Mammary epithelial cell (primary cell): ENCODE measurements at regions of chr2 and their contacts with region 1.

Region 1: DNA sequence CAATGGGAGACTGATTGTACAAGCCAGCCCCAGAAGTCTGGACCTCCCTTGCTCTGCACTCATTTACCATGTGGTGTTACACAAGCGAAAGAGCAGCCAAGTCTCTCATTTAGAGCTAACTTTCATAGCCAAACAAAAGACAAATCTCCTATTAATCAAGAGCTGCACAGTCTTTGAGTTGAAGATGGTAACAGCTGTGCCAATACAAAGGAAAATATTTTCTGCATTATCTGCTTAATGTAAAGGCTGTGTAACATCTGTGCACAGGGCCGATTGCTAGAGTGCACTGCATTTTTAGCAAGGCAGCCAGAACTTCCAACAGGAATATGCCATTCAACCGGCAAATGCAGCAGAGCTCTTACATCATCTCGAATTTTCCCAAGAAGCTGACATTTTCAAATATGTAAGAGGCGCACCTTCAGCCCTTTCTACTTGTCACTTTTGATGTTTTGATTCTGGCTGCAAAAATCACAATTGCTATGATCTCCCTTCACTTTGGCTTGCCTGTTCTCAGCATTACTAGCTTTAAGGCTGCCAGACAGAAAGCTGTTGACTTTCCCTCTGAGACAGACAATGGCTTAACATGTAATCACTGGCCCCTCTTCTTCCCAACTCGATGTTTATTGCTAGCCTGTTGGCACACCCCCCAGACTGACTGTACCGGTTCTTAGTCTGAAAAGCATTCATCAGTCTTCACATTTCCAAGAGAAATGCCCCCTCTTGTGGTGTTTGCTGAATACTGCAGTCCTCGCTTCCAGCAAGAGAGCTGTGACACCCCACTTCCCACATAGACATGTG is 96.9 kb upstream of the TANK start:
- DNase-seq: peak; percentile 77
- H3K4me3 ChIP-seq: no peak overlapping the region
- H3K27ac ChIP-seq: no peak overlapping the region
- H3K4me1 ChIP-seq: peaks cover 7% of the 10 kb centered on the region
- H3K27me3 ChIP-seq: no peaks in the 10 kb centered on the region
- CTCF ChIP-seq: peak; percentile 93 to 96

Region 2: GRCh38 chr2:160252278-160252887 is 811.0 kb before region 1 on chr2:
- CTCF ChIA-PET with region 1: no interaction called
- dilution Hi-C with region 1: no loop called
- in situ Hi-C with region 1: no loop called
- intact Hi-C with region 1: loop called (anchors 10 kb)
- DNase-seq: no peak
- H3K4me3 ChIP-seq: no peak overlapping the region
- H3K27ac ChIP-seq: no peak overlapping the region
- H3K4me1 ChIP-seq: peaks cover 16% of the 10 kb centered on the region
- H3K27me3 ChIP-seq: no peaks in the 10 kb centered on the region
- CTCF ChIP-seq: peak; percentile 76 to 83

Region 3: DNA sequence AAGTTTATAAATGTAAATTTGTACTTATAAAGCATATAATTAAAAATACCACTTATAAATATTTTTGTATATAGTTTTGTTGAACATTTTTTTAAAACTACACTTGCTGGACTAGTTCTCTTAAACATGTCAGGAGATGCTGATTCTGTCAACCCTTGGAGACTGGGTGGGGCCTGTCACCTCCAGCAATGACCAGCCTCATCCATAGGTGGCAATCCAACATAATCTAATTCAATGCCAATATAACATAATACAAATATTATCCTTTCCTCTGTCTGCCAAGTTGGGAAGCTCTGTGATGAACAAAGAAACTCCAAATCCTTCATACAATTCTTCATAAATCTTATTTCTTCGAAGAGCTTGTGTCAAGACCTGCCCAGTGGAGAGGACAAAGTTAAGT is 710.2 kb before region 1 on chr2:
- CTCF ChIA-PET with region 1: no interaction called
- dilution Hi-C with region 1: no loop called
- in situ Hi-C with region 1: no loop called
- intact Hi-C with region 1: loop called (anchors 1 kb)
- DNase-seq: no peak
- H3K4me3 ChIP-seq: no peak overlapping the region
- H3K27ac ChIP-seq: peak overlapping the region; percentile 53
- H3K4me1 ChIP-seq: peaks cover 28% of the 10 kb centered on the region
- H3K27me3 ChIP-seq: no peaks in the 10 kb centered on the region
- CTCF ChIP-seq: peak in 1 of 2 donors; percentile 51

Region 4: DNA sequence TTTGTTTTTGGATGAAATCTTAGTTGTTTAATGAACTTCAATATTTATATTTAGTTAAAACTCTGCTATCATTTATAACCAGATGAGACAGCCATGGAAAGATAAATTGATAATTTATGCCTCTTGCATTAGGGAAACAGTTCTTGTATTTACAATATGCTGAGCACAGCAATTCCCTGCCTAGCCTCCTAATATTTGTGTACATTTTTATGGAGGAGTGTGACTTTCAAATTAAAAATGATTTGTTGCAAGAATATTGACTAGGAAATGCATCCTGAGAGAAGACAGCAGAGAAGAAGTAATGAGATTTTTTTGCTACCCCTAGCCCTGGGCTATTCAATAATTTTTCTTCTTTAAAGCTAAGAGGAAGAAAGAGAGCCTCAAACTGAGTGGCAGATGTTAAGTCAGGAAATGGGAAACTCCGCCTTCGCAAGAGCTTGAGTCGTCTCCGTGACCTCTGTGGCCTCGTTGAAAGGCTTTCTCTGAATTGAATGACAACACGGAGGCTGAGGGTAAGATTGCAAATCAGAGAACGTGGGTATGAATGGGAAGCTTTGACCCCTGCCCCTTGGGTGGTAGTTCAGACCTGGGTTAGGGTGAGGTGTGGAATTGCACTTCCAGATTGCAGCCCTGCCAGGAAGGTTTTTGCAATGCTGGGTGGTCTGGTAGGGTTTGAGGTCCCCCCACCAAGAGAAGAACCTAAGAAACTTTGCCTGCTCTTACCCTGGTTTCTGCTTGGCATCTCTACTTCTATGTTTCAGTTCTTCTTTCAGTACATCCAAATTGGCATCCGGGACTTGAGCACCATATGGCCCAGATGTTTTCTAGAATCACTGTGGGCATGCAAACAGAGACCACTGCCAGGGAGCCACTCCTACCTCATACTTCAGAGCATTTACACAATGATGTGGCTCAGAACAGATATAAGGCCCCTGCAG is 359.4 kb before region 1 on chr2:
- CTCF ChIA-PET with region 1: no interaction called
- dilution Hi-C with region 1: no loop called
- in situ Hi-C with region 1: no loop called
- intact Hi-C with region 1: no loop called
- DNase-seq: no peak
- H3K4me3 ChIP-seq: no peak overlapping the region
- H3K27ac ChIP-seq: no peak overlapping the region
- H3K4me1 ChIP-seq: no peaks in the 10 kb centered on the region
- H3K27me3 ChIP-seq: no peaks in the 10 kb centered on the region
- CTCF ChIP-seq: no peak

Region 5: GRCh38 chr2:161004379-161004778 is 59.0 kb before region 1 on chr2:
- CTCF ChIA-PET with region 1: interaction called, 9 read pairs
- dilution Hi-C with region 1: no loop called
- in situ Hi-C with region 1: no loop called
- intact Hi-C with region 1: loop called (anchors 2 kb)
- DNase-seq: no peak
- H3K4me3 ChIP-seq: no peak overlapping the region
- H3K27ac ChIP-seq: no peak overlapping the region
- H3K4me1 ChIP-seq: no peaks in the 10 kb centered on the region
- H3K27me3 ChIP-seq: no peaks in the 10 kb centered on the region
- CTCF ChIP-seq: peak; percentile 41 to 48

Region 6: GRCh38 chr2:161273038-161273760 is 209.8 kb after region 1 on chr2:
- CTCF ChIA-PET with region 1: no interaction called
- dilution Hi-C with region 1: no loop called
- in situ Hi-C with region 1: no loop called
- intact Hi-C with region 1: loop called (anchors 10 kb)
- DNase-seq: peak; percentile 40
- H3K4me3 ChIP-seq: no peak overlapping the region
- H3K27ac ChIP-seq: no peak overlapping the region
- H3K4me1 ChIP-seq: no peaks in the 10 kb centered on the region
- H3K27me3 ChIP-seq: no peaks in the 10 kb centered on the region
- CTCF ChIP-seq: peak; percentile 59 to 65